ENCODE measurements at regions of chr14 and their contacts with region 1.

Region 1: DNA sequence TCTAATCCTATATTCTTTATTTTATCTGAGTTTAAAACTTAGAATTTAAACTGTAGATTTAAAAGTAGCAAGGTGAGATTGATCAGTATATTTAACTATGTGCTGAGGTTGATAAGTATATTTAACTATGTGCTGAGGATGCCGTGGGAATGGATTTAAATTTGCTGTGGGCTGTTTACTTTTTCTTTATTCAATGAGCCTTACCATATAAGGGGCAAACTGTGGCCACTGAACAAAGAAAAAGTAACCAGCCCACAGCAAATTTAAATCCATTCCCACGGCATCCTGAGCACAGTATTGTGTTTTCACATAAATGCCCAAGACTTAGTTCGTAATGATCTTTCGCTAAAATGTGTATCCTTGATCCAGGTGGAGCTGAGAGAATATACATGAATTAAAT is 43.1 kb downstream of the PROX2 start:
- DNase-seq: no peak
- ATAC-seq: no peak
- H3K4me3 ChIP-seq: no peak overlapping the region
- H3K27ac ChIP-seq: no peak overlapping the region
- H3K4me1 ChIP-seq: no peaks in the 10 kb centered on the region
- CTCF ChIP-seq: no peak
- EP300 ChIP-seq: no peak
- POLR2A ChIP-seq: no peak
- RAD21 ChIP-seq: no peak

Region 2: GRCh38 chr14:74641601-74642391 is 191.1 kb before region 1 on chr14:
- CTCF ChIA-PET with region 1: no interaction called
- POLR2A ChIA-PET with region 1: interaction called, 14 read pairs
- DNase-seq: no peak
- ATAC-seq: peak; percentile 10 to 33; a peak in 4 of 6 replicates
- H3K4me3 ChIP-seq: no peak overlapping the region
- H3K27ac ChIP-seq: no peak overlapping the region
- H3K4me1 ChIP-seq: no peaks in the 10 kb centered on the region
- CTCF ChIP-seq: no peak
- EP300 ChIP-seq: no peak
- POLR2A ChIP-seq: no peak
- RAD21 ChIP-seq: no peak

Region 3: GRCh38 chr14:74852927-74853514 is 20.2 kb after region 1 on chr14:
- CTCF ChIA-PET with region 1: no interaction called
- POLR2A ChIA-PET with region 1: no interaction called
- DNase-seq: no peak
- ATAC-seq: no peak
- H3K4me3 ChIP-seq: no peak overlapping the region
- H3K27ac ChIP-seq: no peak overlapping the region
- H3K4me1 ChIP-seq: no peaks in the 10 kb centered on the region
- CTCF ChIP-seq: no peak
- EP300 ChIP-seq: no peak
- POLR2A ChIP-seq: no peak
- RAD21 ChIP-seq: no peak